ENCODE measurements at regions of chrX and their contacts with region 1.

Region 1: DNA sequence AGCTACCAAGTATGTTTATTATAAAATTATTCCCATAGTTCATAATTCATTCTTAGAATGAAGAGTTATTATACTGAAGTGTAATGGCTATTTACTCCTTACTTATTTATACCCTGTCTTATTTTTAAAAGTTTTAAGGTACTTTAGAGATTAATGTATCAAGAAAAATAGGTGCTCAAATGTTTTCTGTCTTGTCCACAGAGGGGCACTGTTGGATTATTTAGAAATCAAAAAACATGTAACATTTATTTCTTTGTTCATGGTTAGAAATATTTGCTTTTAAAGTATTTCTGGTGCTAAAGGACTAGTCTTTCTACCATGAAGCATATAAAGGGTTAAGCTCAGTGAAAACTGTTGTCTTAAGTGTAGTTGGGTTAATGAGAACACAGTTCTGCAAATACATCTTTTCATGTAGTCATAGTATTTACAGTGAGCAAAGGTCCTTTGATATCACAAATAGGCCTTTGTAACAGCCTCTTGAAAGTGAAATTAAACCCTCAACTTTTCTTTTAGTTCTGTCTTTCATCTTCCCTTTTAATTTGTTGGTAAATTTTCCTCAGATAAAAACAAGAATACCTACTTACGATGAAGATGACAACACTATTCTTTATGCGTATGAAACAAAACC is 7.7 kb downstream of the SCML1 start:
- DNase-seq: no peak
- H3K4me3 ChIP-seq: no peak overlapping the region
- H3K27ac ChIP-seq: no peak overlapping the region
- H3K4me1 ChIP-seq: peaks cover 0 to 3% (median 1%) of the 10 kb centered on the region in 4 donors
- H3K27me3 ChIP-seq: no peaks in the 10 kb centered on the region
- CTCF ChIP-seq: peak in 4 of 5 experiments; percentile 10 to 29 (median 16)
- EP300 ChIP-seq: no peak
- POLR2A ChIP-seq: no peak

Region 2: DNA sequence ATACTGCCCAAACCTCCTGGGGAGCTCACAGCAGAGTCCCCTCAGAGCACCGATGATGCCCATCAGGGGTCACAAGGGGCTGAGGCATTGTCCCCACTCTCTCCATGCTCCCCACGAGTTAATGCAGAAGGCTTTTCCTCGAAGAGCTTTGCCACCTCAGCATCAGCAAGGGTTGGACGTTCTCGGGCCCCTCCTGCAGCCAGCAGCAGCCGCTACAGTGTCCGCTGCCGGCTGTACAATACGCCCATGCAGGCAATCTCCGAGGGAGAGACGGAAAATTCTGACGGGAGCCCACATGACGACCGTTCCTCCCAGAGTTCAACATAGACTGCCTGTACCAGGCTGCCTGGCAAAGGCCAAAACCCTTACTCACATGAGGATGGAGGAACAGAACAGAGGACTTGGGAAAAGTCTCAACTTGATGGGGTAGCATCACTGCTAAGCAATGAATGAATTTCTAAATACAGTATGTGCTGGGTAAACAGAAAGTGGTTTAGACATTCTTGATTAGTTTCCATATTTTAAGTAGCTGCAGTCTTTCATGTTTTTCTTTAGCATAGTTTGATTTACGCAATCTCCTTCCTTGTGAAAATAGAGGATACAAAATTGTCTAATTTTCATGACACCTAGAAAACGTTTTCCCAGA is 12.7 kb before region 1 on chrX:
- in situ Hi-C with region 1: no loop called
- intact Hi-C with region 1: no loop called
- DNase-seq: no peak
- H3K4me3 ChIP-seq: no peak overlapping the region
- H3K27ac ChIP-seq: no peak overlapping the region
- H3K4me1 ChIP-seq: peaks cover 0 to 4% (median 0%) of the 10 kb centered on the region in 4 donors
- H3K27me3 ChIP-seq: no peaks in the 10 kb centered on the region
- CTCF ChIP-seq: no peak
- EP300 ChIP-seq: no peak
- POLR2A ChIP-seq: no peak

Region 3: GRCh38 chrX:18886344-18887161 is 1141.5 kb after region 1 on chrX:
- in situ Hi-C with region 1: no loop called
- intact Hi-C with region 1: loop called (anchors 5 kb)
- DNase-seq: peak; percentile 81
- H3K4me3 ChIP-seq: peak overlapping the region in 3 of 4 donors; percentile 24 to 51 (median 27)
- H3K27ac ChIP-seq: peak overlapping the region; percentile 67 to 84 (median 79)
- H3K4me1 ChIP-seq: peaks cover 0 to 21% (median 10%) of the 10 kb centered on the region in 4 donors
- H3K27me3 ChIP-seq: no peaks in the 10 kb centered on the region
- CTCF ChIP-seq: peak; percentile 42 to 81 (median 51)
- EP300 ChIP-seq: no peak
- POLR2A ChIP-seq: peak; percentile 50

Measured in transverse colon (tissue), 4 donors.